ENCODE measurements at regions of chr3 and their contacts with region 1.

Region 1: DNA sequence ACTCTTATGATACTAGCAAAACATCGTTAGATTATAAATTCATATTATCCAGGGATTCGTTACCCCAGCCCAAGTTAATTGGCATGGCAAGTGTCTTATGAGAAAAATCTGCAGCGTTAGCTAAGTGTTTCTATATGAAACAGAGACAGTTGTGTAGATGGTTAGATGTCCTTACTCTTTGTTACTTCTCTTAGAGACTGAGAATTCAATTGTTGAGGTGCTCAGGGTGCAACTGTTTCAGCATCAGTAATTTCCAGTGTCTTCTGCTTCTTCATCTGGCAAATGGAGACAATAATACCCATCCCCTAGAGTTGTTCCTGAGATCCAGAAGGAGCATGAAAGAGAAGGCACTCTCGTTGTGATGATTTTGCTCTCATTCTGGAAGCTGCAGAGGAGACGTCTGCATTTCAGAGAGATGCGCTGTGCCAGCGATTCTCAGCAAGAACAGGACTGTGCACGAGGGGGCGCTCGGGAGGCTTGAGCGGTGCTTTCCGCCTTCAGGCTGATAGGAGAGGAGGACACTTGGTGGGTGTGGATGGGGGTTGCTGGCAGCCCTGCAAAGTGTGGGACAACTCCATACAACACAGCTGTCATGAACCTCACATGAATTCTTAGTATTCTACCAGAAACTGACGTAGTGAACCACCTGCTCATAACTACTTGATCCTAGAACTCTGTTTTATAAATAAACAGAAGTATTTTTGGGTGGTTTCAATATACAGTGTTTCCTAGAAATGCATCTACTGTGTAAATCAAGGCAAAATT is 39.7 kb upstream of the SPSB4 start:
- DNase-seq: peak; percentile 85
- H3K4me3 Mint-ChIP-seq: no peak overlapping the region
- H3K27ac Mint-ChIP-seq: no peak overlapping the region
- H3K4me1 Mint-ChIP-seq: no peaks in the 10 kb centered on the region
- H3K27me3 Mint-ChIP-seq: peaks cover 33% of the 10 kb centered on the region

Region 2: DNA sequence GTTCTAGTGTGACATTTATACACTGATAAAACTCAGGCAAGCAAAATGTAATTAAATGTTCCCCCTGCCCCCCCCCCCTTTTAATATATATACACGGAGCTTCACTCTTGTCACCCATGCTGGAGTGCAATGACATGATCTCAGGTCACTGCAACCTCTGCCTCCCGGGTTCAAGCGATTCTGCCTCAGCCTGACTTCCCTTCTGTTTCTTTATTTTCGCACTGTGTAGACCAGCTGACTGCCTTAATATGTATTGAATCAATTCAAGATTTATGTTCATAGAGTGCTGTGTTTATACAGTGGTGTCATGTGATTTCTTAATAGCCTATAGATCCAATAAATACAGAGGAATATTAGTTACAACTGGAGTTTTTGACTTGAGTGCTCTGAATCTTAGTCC is 30.8 kb before region 1 on chr3:
- CTCF ChIA-PET with region 1: no interaction called
- DNase-seq: no peak
- H3K4me3 Mint-ChIP-seq: no peak overlapping the region
- H3K27ac Mint-ChIP-seq: no peak overlapping the region
- H3K4me1 Mint-ChIP-seq: peaks cover 3% of the 10 kb centered on the region
- H3K27me3 Mint-ChIP-seq: no peaks in the 10 kb centered on the region

Region 3: DNA sequence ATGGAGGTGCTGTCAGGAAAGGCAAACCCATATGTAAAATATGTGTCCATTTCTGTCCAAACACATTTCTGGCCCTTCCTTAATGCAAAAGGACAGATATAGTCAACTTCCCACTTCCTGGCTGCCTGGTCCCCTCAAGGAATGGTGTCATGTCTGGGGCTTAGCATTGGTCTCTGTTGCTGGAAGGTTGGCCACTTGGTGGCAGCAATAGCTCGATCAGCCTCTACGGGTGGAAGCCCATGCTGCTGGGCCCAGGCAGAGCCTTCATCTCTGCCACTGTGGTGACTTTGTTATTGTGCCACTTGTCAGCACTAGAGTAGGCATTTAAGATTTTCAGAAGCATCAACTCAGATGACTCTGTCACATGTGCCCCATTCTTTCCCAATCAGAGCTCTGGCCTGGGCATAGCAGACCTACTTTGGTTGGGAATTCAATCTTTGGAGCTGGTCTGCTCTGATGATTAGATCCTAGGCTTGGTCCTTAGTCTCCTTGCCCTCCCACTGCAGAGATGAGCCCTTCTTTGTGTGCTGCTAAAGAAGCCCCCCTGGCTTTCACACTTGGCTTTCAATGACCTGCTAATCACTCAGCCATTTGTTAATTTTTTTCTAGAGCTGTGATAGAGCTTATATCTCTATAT is 11.3 kb before region 1 on chr3:
- CTCF ChIA-PET with region 1: interaction called, 44 read pairs
- DNase-seq: peak; percentile 61
- H3K4me3 Mint-ChIP-seq: no peak overlapping the region
- H3K27ac Mint-ChIP-seq: no peak overlapping the region
- H3K4me1 Mint-ChIP-seq: peaks cover 5% of the 10 kb centered on the region
- H3K27me3 Mint-ChIP-seq: peaks cover 7% of the 10 kb centered on the region

Region 4: DNA sequence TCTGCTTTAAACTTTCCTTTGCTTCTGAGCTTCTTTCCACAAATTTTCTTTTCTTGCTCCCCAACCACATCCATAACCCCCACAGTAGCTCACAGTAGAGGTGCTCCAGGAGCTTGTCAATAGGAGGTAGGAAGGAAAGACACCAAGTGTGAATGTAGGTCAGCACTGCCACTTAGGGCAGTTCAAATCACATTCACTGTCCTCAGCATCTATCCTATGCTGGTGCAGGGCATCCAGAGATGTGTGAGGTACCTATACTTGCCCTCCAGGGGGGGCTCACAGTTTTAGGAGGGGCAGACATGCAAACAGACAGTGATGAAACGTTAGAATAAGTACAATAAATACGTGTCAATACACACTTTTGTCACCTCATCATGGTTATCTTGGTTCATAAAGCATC is 38.3 kb after region 1 on chr3:
- CTCF ChIA-PET with region 1: no interaction called
- DNase-seq: no peak
- H3K4me3 Mint-ChIP-seq: no peak overlapping the region
- H3K27ac Mint-ChIP-seq: no peak overlapping the region
- H3K4me1 Mint-ChIP-seq: peaks cover 13% of the 10 kb centered on the region
- H3K27me3 Mint-ChIP-seq: peaks cover 74% of the 10 kb centered on the region

Region 5: DNA sequence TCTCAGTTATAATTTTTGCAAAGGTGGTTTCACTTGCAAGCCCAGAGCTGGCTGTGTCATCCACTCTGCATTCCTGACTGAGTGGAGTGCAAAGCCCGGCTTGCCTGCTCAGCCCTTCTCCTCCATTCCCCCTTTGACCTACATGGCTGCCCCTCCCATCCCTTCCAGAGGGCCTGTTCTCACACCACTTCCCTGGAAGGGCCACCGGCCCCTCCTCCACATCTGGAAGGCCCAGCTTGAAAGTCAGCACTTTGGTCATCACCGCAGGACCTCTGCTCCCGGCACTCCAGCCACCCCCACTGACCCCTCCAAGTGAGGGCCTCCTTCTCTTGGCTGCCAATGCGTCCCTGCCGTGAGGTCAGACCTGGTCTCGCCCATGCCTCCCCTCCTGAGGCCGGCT is 652.6 kb after region 1 on chr3:
- CTCF ChIA-PET with region 1: no interaction called
- DNase-seq: no peak
- H3K4me3 Mint-ChIP-seq: no peak overlapping the region
- H3K27ac Mint-ChIP-seq: no peak overlapping the region
- H3K4me1 Mint-ChIP-seq: peaks cover 7% of the 10 kb centered on the region
- H3K27me3 Mint-ChIP-seq: peaks cover 53% of the 10 kb centered on the region

Measured in activated naive CD4-positive, alpha-beta T cell treated with anti-CD3 and anti-CD28 coated beads, Interleukin-2, amount 10 ng/mL, durations not matched to agents 7 days and 5 days (primary cell).